ENCODE measurements at regions of chr12 and their contacts with region 1.

Region 1: DNA sequence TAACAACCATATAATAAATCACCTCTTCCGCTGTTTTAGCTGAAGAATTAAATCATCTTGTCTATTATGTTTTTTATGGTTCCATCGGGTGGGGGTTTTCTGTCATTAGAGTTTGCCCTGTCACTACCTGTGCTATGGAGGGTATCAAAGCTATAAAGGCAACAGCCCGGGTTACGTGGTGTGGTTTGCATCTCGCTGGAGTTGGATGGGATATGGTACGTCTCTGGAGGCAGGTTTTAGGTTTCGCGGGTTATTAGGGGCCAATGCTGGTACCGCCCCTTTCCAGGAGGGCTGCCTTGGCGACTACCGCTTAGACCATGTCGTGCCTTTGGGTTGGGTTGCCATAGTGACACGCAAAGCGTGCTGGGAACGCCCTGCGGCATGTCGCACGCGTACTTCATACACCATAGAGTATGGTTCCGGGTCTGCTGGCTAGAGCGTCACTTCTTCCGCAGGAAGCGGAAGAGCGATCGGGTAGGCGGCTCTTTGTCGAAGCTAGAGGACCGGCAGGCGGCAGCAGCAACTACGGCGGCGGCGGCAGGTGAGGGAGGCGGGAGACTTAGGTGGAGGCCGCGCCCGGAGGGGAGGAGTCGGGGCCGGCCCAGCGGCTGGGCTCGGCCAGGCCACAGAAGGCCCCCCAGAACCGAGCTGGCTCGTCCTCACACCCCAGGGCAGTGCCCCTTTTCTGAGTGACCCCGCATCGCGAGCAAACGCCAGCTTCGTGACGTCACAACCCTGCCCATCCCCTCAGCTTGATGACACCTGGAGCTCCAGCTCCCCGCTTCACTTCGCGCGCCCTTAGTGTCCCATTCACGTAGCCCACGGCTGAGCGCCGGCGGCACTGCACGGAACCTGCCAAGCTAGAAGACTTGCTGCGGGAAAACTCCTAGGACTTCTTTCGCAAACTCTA is at the start of gene ZC3H10:
- DNase-seq: peak; percentile 98
- ATAC-seq: peak; percentile 87
- total RNA-seq, gene ZC3H10: 7.3 TPM

Region 2: GRCh38 chr12:55966408-55967281 is 151.4 kb before region 1 on chr12 and contains the start of gene CDK2:
- intact Hi-C with region 1: no loop called
- DNase-seq: peak; percentile 95
- ATAC-seq: peak; percentile 95
- total RNA-seq, gene CDK2: 11.6 TPM

Region 3: DNA sequence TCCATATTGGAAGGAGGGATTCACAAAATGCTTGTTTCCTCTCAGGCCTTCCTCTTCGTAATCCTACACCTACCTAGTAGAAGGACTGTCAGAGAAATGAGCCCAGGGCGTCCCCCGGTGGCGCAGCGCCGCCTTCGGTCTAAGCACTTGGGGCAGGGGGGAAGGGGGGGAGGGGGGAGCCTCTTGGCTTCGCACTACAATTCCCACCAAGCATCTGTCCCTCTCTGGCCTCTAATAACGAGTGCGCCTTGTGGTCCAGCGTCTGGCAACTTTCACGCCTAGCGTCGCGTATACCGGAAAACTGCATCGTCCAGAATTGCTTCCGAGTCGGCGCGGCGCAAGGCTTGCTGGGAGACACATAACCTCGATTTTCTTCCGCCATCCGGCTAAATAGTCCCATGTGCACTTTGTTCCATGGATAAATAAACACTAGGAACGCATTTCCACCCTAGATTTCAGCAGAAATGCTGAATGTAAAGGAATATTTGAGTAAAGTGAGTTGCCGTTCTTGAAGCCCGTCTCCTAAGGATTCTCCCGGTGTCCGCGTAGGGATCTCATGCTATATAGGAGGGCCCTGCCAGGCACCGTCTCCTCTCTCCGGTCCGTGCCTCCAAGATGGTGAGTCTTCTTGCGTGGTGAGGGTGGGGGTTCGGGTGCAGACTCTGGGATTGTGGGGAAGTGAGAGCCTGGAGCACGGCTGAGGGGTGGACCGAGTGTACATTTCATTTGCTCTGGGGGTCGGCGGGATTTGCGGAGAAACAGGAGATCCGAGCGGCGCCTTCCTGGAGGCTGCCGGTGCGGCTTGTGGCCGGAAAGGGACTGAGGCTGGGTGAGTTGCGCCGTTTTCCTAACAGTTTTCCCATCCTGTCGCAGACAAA is 76.2 kb before region 1 on chr12 and contains the start of gene RPS26:
- intact Hi-C with region 1: loop called (anchors 5 kb)
- DNase-seq: peak; percentile 97
- ATAC-seq: peak; percentile 97
- total RNA-seq, gene RPS26: 35.5 TPM

Region 4: DNA sequence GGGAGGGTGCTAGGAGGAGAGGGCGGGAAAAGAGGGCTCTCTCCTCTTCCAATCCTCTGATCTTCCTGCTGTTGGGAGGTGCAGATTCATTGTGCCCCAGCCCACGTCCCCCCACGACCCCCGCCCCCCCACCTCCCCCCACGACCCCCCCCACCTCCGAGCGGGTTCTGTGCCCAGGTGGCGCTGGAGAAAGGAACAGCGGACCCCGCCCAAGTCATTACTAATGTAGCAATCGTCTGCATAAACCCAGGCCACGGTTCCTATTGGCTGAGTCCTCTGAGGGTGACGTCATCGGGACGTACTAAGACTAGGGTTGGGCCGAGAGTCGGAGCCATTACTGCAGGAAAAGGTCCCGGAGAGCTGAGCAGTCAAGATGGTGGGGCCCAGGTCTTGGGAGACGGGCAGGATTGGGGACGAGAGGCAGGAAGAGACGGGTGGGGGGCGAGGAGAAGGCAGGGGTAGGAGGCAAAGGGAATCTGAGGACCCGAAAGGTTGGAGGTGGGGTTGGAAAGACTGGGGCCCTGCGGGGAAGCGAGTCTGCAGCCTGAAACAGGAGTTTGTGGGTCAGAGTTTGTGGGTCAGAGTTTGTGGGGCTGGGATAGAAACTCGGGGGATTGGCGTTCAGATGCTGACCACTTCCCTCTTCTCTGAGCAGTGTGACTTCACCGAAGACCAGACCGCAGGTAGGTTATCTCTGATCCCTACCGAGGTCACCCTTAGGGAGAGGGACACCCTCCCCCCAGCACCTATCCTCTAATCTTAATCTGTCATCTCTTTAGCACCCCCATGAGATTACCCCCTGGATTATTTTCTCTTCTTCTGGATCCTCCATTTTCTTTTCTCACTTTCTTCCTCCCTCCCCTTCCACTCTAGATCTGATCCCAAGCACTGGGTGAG is 40.2 kb after region 1 on chr12 and contains the start of gene MYL6:
- intact Hi-C with region 1: loop called (anchors 5 kb)
- DNase-seq: peak; percentile 97
- ATAC-seq: peak; percentile 91
- total RNA-seq, gene MYL6: 673 TPM

Region 5: GRCh38 chr12:56224102-56224701 is 106.2 kb after region 1 on chr12 and contains the start of gene NABP2:
- intact Hi-C with region 1: loop called (anchors 1 kb)
- DNase-seq: peak; percentile 99
- ATAC-seq: peak; percentile 87
- total RNA-seq, gene NABP2: 22.2 TPM